Activated B cell treated with CpG ODN at 0.5 μM for 24 hours (primary cell): ENCODE measurements at regions of chr7 and their contacts with region 1.

Region 1: DNA sequence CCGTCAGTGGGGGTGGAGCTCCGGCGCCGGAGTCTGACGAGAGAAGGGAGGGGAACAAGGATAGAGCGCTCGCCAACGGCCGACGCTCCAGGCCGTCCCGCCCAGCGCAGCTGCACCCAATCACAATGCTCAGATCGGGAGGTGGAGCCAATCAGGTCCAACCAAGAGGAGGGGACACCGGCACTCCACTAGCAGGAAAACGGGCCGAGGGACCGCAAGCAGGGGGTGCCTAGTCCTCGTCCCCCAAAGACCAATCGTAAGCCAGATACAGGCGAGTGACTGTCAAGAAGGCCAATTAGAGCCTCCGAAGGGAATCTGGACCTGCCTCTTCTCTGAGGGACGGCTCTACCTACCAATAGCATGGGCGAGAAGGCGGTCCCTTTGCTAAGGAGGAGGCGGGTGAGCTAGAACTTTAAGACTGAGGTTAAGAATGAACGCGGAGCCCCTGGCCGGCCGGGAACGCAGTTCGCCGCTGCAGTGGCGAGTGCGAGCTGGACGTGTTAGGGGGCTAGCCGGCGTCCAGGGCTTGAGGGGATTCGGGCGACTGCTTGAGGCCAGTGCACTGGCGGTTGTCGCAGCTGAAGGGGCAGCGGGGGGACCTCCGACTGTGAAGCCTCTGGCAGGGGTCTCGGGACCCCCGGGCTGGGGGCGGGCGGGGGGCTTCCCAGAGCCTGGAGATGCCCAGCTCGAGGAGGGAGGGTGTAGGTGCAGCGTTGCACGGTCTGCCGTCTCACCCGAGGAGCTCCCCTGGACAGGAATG is at the start of gene FBXO24:
- DNase-seq: peak; percentile 94
- ATAC-seq: peak; percentile 80
- H3K4me3 Mint-ChIP-seq: peak within 1 kb of the TSS; percentile 93
- H3K27ac Mint-ChIP-seq: peak within 1 kb of the TSS; percentile 96
- H3K4me1 Mint-ChIP-seq: peaks cover 38% of the 10 kb centered on the region
- H3K27me3 Mint-ChIP-seq: peaks cover 6% of the 10 kb centered on the region
- CTCF ChIP-seq: no peak
- total RNA-seq, gene FBXO24: 0.29 and 1.9 TPM in 2 replicates

Region 2: DNA sequence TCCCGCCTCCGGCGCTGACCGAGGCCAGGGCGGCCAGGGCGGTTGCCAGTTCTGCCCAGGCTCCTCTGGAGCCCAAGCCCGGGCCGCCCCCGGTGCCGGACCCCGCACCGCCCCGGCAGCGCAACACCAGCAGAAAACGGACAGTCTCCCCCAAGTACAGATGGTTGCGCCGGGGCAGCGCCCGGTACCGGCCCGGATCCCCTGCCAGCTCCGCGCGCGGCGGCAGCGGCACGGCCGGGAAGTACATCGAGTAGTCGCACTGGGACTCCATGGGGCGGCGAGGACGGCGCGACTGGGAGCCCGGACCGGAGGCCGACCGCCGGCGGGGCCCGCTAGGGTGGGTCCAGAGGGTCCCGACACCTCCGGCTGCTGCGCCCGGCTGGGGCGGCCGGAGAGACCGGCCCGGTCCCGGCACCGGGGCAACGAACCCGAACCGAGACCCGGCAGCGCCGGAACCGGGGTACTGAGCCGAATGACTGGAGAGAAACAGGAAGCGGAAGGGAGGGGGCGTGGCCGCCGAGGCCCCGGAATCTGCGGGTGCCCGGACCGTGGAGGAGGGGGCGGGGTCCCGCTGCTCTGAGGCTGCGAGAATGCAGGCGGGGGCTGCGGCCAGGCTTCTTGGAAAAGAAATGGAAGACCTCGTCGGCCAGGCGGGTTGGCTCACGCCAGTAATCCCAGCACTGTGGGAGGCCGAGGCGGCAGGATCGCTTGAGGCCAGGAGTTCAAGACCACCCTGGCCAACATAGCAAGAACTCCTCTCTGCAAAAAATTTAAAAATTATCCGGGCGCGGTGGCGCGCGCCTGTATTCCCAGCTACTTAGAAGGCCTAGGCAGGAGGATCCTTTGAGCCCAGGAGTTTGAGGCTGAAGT is 428.0 kb before region 1 on chr7 and contains the start of gene TRAPPC14:
- CTCF ChIA-PET with region 1: no interaction called
- POLR2A ChIA-PET with region 1: no interaction called
- intact Hi-C with region 1: loop called (anchors 5 kb)
- DNase-seq: peak; percentile 93
- ATAC-seq: peak; percentile 89
- H3K4me3 Mint-ChIP-seq: peak within 1 kb of the TSS; percentile 85
- H3K27ac Mint-ChIP-seq: peak within 1 kb of the TSS; percentile 86
- H3K4me1 Mint-ChIP-seq: peaks cover 44% of the 10 kb centered on the region
- H3K27me3 Mint-ChIP-seq: no peaks in the 10 kb centered on the region
- CTCF ChIP-seq: no peak
- total RNA-seq, gene TRAPPC14: 55.7 and 65.3 TPM in 2 replicates

Region 3: DNA sequence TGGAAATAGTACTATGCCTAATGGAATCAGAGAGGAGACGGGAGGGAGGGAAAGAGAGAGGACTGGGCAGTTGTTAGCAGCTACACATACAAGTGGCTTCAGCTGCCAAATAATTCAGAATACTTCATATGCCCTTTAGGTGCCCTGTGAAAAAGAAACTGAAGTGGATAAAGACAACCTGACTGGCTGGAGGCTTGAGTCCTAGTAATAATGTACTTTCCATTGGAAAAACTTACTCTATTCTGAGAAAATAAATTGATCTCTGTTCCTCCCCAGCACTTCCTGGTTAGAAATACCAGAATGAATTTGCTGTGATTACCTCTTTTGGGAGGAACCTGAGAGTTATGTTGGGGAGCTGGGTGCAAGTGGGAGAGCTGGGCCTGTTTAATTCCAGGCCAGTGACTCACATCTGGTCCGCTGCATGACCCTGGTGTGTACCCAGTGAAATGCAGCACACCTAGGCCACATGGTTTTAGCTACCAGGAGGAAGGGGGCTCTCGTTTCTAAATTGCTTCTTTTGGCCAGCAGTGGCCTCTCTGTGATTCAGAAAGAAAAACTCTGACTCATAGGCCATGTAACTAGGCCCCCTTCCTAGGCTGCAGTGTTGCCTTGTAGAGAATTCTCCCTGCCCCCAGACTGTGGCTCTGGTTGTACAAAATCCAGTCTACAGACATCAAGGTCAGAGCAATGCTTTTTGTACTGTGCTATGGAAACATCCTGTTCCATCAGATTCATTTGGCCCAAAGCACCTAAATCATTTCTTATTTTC is 40.9 kb before region 1 on chr7:
- CTCF ChIA-PET with region 1: interaction called, 3 read pairs
- POLR2A ChIA-PET with region 1: interaction called, 13 read pairs
- intact Hi-C with region 1: no loop called
- DNase-seq: no peak
- ATAC-seq: peak; percentile 59
- H3K4me3 Mint-ChIP-seq: peak overlapping the region; percentile 32
- H3K27ac Mint-ChIP-seq: peak overlapping the region; percentile 80
- H3K4me1 Mint-ChIP-seq: peaks cover 77% of the 10 kb centered on the region
- H3K27me3 Mint-ChIP-seq: no peaks in the 10 kb centered on the region
- CTCF ChIP-seq: no peak

Region 4: DNA sequence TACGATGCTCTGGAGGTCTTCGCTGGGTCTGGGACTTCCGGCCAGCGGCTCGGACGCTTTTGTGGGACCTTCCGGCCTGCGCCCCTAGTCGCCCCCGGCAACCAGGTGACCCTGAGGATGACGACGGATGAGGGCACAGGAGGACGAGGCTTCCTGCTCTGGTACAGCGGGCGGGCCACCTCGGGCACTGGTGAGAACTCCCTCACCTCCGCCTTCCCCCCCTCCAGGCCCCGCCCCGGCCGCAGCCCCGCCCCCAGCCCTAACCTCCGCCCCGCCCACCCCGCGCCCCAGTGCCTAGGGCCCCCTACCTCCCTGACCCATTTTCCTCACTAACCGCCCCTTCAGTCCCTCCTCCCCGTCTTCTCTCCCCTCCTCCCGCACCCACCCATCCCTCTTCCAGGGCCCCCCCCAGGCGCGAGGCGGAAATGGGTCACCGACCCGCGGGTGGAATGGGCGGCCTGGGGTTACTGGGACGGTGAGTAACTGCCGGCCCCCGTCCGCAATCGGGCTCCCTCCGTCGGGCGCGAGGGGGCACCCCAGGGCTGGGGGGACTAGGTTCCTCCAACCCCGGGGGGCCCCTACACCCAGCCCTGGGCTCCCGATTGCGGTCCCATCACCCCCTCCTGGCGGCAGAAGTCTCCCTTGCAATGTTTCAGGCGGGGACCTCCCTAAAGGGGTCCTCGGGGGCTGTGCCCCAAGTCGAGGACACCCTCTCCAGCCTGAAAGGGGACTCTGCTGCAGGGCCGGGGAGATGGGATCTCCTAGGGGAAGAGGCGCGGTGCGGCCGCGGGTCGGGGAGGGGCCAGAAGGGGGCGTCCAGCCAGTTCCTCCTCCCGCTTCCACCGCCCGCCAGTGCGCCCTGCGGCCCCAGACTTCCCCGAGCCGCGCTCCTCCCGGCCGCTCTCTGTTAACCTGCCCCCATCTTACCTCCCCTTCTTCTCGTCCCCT is 17.9 kb after region 1 on chr7:
- CTCF ChIA-PET with region 1: interaction called, 4 read pairs
- POLR2A ChIA-PET with region 1: interaction called, 114 read pairs
- intact Hi-C with region 1: loop called (anchors 1 kb)
- DNase-seq: peak; percentile 75
- ATAC-seq: peak; percentile 78
- H3K4me3 Mint-ChIP-seq: peak overlapping the region; percentile 85
- H3K27ac Mint-ChIP-seq: peak overlapping the region; percentile 30
- H3K4me1 Mint-ChIP-seq: peaks cover 19% of the 10 kb centered on the region
- H3K27me3 Mint-ChIP-seq: no peaks in the 10 kb centered on the region
- CTCF ChIP-seq: no peak

Region 5: GRCh38 chr7:100632951-100633717 is 46.7 kb after region 1 on chr7:
- CTCF ChIA-PET with region 1: interaction called, 7 read pairs
- POLR2A ChIA-PET with region 1: interaction called, 47 read pairs
- intact Hi-C with region 1: loop called (anchors 1 kb)
- DNase-seq: peak; percentile 63
- ATAC-seq: peak; percentile 71
- H3K4me3 Mint-ChIP-seq: peak overlapping the region; percentile 89
- H3K27ac Mint-ChIP-seq: peak overlapping the region; percentile 78
- H3K4me1 Mint-ChIP-seq: peaks cover 4% of the 10 kb centered on the region
- H3K27me3 Mint-ChIP-seq: no peaks in the 10 kb centered on the region
- CTCF ChIP-seq: no peak

Region 6: GRCh38 chr7:100705753-100706671 is 119.6 kb after region 1 on chr7 and contains the start of gene POP7:
- CTCF ChIA-PET with region 1: interaction called, 9 read pairs
- POLR2A ChIA-PET with region 1: interaction called, 19 read pairs
- intact Hi-C with region 1: loop called (anchors 1 kb)
- DNase-seq: peak; percentile 98
- ATAC-seq: peak; percentile 94
- H3K4me3 Mint-ChIP-seq: peak within 1 kb of the TSS; percentile 93
- H3K27ac Mint-ChIP-seq: peak within 1 kb of the TSS; percentile 88
- H3K4me1 Mint-ChIP-seq: peaks cover 16% of the 10 kb centered on the region
- H3K27me3 Mint-ChIP-seq: no peaks in the 10 kb centered on the region
- CTCF ChIP-seq: no peak
- total RNA-seq, gene POP7: 21.5 and 21.7 TPM in 2 replicates

Region 7: GRCh38 chr7:100874577-100875355 is 288.3 kb after region 1 on chr7 and contains the start of gene SRRT:
- CTCF ChIA-PET with region 1: no interaction called
- POLR2A ChIA-PET with region 1: interaction called, 11 read pairs
- intact Hi-C with region 1: no loop called
- DNase-seq: peak; percentile 96
- ATAC-seq: peak; percentile 96
- H3K4me3 Mint-ChIP-seq: peak within 1 kb of the TSS; percentile 99
- H3K27ac Mint-ChIP-seq: peak within 1 kb of the TSS; percentile 98
- H3K4me1 Mint-ChIP-seq: peaks cover 45% of the 10 kb centered on the region
- H3K27me3 Mint-ChIP-seq: no peaks in the 10 kb centered on the region
- CTCF ChIP-seq: no peak
- total RNA-seq, gene SRRT: 229 and 244 TPM in 2 replicates